CD8-positive, alpha-beta T cell (primary cell): ENCODE measurements at regions of chr4 and their contacts with region 1.

Region 1: DNA sequence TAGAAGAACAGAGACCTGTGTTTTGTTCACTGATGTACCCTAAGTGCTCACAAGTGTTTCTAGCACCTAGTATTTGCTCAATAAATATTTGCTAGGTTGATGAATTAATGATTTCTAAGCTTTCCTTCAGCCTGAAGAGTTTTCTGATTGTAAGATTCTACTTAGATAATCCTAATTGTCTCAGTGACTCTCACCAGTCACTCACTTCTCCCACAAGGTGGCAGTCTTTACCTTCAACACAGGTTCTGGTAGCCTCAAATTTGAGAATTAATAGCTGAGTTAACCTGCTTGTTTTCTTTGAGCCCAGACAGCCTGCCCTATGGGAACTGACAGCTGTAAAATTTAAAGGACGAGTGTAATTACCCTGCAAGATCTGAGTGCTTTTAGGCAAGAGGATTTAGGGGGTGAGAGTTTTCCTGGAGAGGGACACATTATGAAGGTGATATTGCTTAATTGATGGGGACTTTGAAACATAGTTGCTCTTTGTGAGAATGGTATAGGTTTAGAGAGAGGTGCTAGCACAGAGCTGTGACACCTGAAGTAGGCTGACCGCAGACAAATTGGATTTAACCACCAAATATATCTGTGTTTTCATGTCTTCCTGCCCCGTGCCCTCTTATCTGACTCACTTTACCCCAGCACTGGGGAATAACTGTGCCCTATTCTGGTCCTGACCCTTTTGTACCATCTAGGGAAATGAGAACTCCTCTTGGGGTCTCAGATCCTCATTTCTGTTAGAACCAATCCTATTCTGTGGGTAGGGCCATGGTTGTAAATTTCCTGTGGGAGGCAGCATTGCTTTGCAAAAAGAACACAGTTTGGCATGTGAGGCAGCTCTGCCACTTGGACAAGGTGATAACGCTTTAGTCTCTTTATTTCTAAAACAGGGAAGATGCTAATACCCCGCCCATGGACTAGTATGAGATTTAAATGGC is 27.7 kb downstream of the CD38 start:
- DNase-seq: peak in 7 of 9 experiments; percentile 9 to 76 (median 43)
- ATAC-seq: peak; percentile 82
- H3K4me3 ChIP-seq: no peak overlapping the region
- H3K4me3 Mint-ChIP-seq: no peak overlapping the region
- H3K27ac ChIP-seq: no peak overlapping the region
- H3K27ac Mint-ChIP-seq: no peak overlapping the region
- H3K4me1 ChIP-seq: no peaks in the 10 kb centered on the region
- H3K4me1 Mint-ChIP-seq: peaks cover 15% of the 10 kb centered on the region
- H3K27me3 ChIP-seq: no peaks in the 10 kb centered on the region
- H3K27me3 Mint-ChIP-seq: no peaks in the 10 kb centered on the region
- CTCF ChIP-seq: peak; percentile 82

Region 2: GRCh38 chr4:15756361-15756861 is 49.4 kb before region 1 on chr4:
- CTCF ChIA-PET with region 1: interaction called, 19 read pairs
- POLR2A ChIA-PET with region 1: interaction called, 4 read pairs
- intact Hi-C with region 1: loop called in 1 of 2 experiments (anchors 10 kb)
- DNase-seq: peak; percentile 28 to 94 (median 71)
- ATAC-seq: peak; percentile 85
- H3K4me3 ChIP-seq: peak overlapping the region; percentile 14 to 23
- H3K4me3 Mint-ChIP-seq: peak overlapping the region; percentile 67
- H3K27ac ChIP-seq: peak overlapping the region; percentile 27 to 63
- H3K27ac Mint-ChIP-seq: peak overlapping the region; percentile 84
- H3K4me1 ChIP-seq: peaks cover 43% of the 10 kb centered on the region
- H3K4me1 Mint-ChIP-seq: peaks cover 50% of the 10 kb centered on the region
- H3K27me3 ChIP-seq: no peaks in the 10 kb centered on the region
- H3K27me3 Mint-ChIP-seq: no peaks in the 10 kb centered on the region
- CTCF ChIP-seq: peak; percentile 77

Region 3: GRCh38 chr4:15864651-15865566 is 59.1 kb after region 1 on chr4:
- CTCF ChIA-PET with region 1: no interaction called
- POLR2A ChIA-PET with region 1: no interaction called
- intact Hi-C with region 1: no loop called
- DNase-seq: no peak
- ATAC-seq: no peak
- H3K4me3 ChIP-seq: no peak overlapping the region
- H3K4me3 Mint-ChIP-seq: no peak overlapping the region
- H3K27ac ChIP-seq: no peak overlapping the region
- H3K27ac Mint-ChIP-seq: no peak overlapping the region
- H3K4me1 ChIP-seq: no peaks in the 10 kb centered on the region
- H3K4me1 Mint-ChIP-seq: no peaks in the 10 kb centered on the region
- H3K27me3 ChIP-seq: no peaks in the 10 kb centered on the region
- H3K27me3 Mint-ChIP-seq: no peaks in the 10 kb centered on the region
- CTCF ChIP-seq: no peak

Region 4: GRCh38 chr4:15956179-15956850 is 150.5 kb after region 1 on chr4:
- CTCF ChIA-PET with region 1: interaction called, 28 read pairs
- POLR2A ChIA-PET with region 1: no interaction called
- intact Hi-C with region 1: loop called (anchors 1 kb)
- DNase-seq: peak; percentile 55 to 87 (median 79)
- ATAC-seq: peak; percentile 98
- H3K4me3 ChIP-seq: no peak overlapping the region
- H3K4me3 Mint-ChIP-seq: no peak overlapping the region
- H3K27ac ChIP-seq: no peak overlapping the region
- H3K27ac Mint-ChIP-seq: no peak overlapping the region
- H3K4me1 ChIP-seq: no peaks in the 10 kb centered on the region
- H3K4me1 Mint-ChIP-seq: peaks cover 10% of the 10 kb centered on the region
- H3K27me3 ChIP-seq: no peaks in the 10 kb centered on the region
- H3K27me3 Mint-ChIP-seq: no peaks in the 10 kb centered on the region
- CTCF ChIP-seq: peak; percentile 73

Region 5: GRCh38 chr4:16001484-16001858 is 195.6 kb after region 1 on chr4:
- CTCF ChIA-PET with region 1: interaction called, 22 read pairs
- POLR2A ChIA-PET with region 1: no interaction called
- intact Hi-C with region 1: loop called (anchors 1 kb)
- DNase-seq: peak in 8 of 9 experiments; percentile 13 to 81 (median 47)
- ATAC-seq: peak; percentile 96
- H3K4me3 ChIP-seq: no peak overlapping the region
- H3K4me3 Mint-ChIP-seq: no peak overlapping the region
- H3K27ac ChIP-seq: no peak overlapping the region
- H3K27ac Mint-ChIP-seq: no peak overlapping the region
- H3K4me1 ChIP-seq: no peaks in the 10 kb centered on the region
- H3K4me1 Mint-ChIP-seq: no peaks in the 10 kb centered on the region
- H3K27me3 ChIP-seq: no peaks in the 10 kb centered on the region
- H3K27me3 Mint-ChIP-seq: peaks cover 3% of the 10 kb centered on the region
- CTCF ChIP-seq: peak; percentile 68

Region 6: DNA sequence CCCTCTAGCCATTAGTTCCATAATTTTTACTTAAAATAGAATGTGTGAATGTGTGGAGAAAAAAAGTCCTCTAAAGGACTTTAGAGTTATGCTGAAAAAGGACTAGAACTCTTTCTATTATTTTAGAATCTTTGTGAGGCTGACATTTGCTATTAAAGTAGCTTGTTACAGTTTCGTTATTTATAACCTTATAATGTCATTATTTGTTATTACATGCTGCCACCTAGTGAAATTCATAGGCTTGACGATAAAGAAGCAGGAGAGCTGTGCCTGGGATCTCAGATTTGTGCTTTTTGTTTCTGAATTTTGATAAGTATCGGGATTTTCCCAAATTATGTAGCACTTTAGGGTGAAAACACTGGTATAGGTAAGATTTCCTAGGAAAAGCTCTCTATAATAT is 458.9 kb after region 1 on chr4:
- CTCF ChIA-PET with region 1: interaction called, 10 read pairs
- POLR2A ChIA-PET with region 1: no interaction called
- intact Hi-C with region 1: loop called in 1 of 2 experiments (anchors 10 kb)
- DNase-seq: peak in 2 of 9 experiments; percentile 50 to 63
- ATAC-seq: no peak
- H3K4me3 ChIP-seq: no peak overlapping the region
- H3K4me3 Mint-ChIP-seq: no peak overlapping the region
- H3K27ac ChIP-seq: no peak overlapping the region
- H3K27ac Mint-ChIP-seq: no peak overlapping the region
- H3K4me1 ChIP-seq: no peaks in the 10 kb centered on the region
- H3K4me1 Mint-ChIP-seq: peaks cover 6% of the 10 kb centered on the region
- H3K27me3 ChIP-seq: no peaks in the 10 kb centered on the region
- H3K27me3 Mint-ChIP-seq: no peaks in the 10 kb centered on the region
- CTCF ChIP-seq: peak; percentile 69